CD4-positive, alpha-beta memory T cell (primary cell): ENCODE measurements at regions of chr4 and their contacts with region 1.

Region 1: DNA sequence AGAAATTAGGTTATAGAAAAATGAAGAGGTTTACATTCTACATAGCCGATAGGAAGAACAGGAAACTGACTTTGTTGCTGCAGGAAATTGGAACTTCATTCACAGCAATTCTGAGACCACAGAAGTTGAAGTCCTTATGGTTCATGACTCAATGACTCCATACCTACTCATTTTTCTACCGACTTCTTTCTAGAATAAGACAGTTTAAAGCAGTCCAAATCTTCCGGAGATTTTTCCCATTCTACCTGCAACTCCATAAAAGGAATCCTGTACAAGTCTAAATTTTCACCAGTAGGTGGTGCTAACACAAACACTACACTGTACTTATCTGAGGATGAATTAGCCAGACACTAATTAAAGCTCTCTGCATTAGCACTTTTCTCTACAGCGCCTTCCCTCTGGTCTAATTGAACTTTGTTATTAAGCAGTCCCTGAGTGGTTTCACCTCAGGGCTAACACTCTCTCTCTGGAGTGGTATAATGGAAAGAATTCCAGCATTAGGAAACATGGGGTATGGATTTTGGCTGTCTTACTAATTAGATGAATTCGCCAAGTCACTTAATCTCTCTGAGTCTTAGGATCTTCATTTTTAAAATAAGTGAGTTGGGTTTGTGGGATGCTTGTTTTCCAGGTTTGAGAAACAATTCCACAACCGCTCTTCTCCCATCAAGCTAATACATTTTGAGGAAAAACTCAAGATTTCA is 167.9 kb downstream of the SMIM20 start:
- DNase-seq: peak in 4 of 5 donors; percentile 40 to 55 (median 44)
- H3K4me3 ChIP-seq: no peak overlapping the region
- H3K4me3 Mint-ChIP-seq: peak overlapping the region in 2 of 8 donors; percentile 40 to 47
- H3K27ac ChIP-seq: no peak overlapping the region
- H3K27ac Mint-ChIP-seq: peak overlapping the region in 5 of 7 donors; percentile 4 to 62 (median 31)
- H3K4me1 ChIP-seq: peaks cover 9% of the 10 kb centered on the region
- H3K4me1 Mint-ChIP-seq: peaks cover 9 to 18% (median 15%) of the 10 kb centered on the region in 4 donors
- H3K27me3 ChIP-seq: no peaks in the 10 kb centered on the region
- H3K27me3 Mint-ChIP-seq: no peaks in the 10 kb centered on the region

Region 2: DNA sequence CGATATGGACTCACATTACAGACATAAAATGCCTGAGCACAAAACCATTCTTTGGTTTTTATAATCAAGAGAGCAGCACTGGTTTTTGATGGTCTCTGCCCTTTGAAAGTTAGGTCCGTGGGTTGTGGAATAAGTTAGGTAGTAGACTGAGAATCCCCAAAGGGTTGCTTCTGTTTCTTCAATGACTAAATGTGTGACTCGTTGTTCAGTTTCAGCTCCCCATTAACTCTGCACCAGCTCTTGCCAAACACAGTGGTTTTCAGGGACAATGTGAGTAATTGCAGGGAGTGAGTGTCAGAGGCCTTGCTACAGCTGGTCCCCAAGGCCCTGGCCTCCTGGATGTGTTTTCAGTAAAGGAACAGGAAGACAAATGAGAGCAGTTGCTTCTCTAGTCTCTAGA is 143.2 kb before region 1 on chr4:
- CTCF ChIA-PET with region 1: no interaction called
- POLR2A ChIA-PET with region 1: no interaction called
- intact Hi-C with region 1: no loop called
- DNase-seq: no peak
- H3K4me3 ChIP-seq: no peak overlapping the region
- H3K4me3 Mint-ChIP-seq: peak overlapping the region in 1 of 8 donors; percentile 52
- H3K27ac ChIP-seq: no peak overlapping the region
- H3K27ac Mint-ChIP-seq: peak overlapping the region in 1 of 7 donors; percentile 67
- H3K4me1 ChIP-seq: no peaks in the 10 kb centered on the region
- H3K4me1 Mint-ChIP-seq: peaks cover 6 to 15% (median 11%) of the 10 kb centered on the region in 4 donors
- H3K27me3 ChIP-seq: no peaks in the 10 kb centered on the region
- H3K27me3 Mint-ChIP-seq: peaks cover 6 to 7% of the 10 kb centered on the region in 2 donors

Region 3: DNA sequence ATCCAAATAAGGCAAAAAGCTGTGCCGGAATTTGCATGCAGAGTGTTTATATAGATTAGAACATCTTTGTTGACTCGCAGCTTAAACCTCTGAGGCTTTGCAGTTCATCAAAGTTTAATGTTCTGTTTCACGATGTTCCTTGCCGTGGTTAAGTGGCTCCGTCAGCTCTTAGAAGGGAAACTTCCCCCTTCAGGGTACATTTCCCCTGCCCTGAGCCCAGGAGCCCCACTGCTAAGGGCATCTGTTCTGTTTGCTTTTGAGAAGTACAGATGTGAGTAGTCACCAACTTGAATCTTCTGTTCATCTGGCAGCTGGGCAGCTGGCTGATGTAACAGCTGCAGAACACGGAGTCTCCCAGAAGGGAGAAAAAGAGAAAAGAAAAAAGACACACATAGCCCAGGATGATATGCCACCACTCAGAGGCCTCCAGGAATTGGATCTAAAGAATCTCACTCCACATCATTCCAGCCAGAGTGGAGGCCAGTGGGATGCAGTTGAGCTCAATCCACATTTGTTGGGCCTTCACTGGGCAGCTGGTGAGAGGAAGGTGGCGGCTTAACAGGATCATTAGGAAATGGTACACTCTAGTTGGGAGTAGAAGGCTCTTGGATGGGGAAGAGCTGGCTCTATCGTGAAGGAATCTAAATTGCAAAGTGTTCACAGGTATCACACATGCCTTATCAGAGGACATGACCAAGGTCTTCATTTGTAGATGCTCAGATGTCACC is 60.1 kb after region 1 on chr4:
- CTCF ChIA-PET with region 1: no interaction called
- POLR2A ChIA-PET with region 1: no interaction called
- intact Hi-C with region 1: no loop called
- DNase-seq: peak in 2 of 5 donors; percentile 11 to 21
- H3K4me3 ChIP-seq: no peak overlapping the region
- H3K4me3 Mint-ChIP-seq: peak overlapping the region in 1 of 8 donors; percentile 14
- H3K27ac ChIP-seq: no peak overlapping the region
- H3K27ac Mint-ChIP-seq: peak overlapping the region in 5 of 7 donors; percentile 6 to 92 (median 37)
- H3K4me1 ChIP-seq: no peaks in the 10 kb centered on the region
- H3K4me1 Mint-ChIP-seq: peaks cover 4 to 28% (median 12%) of the 10 kb centered on the region in 4 donors
- H3K27me3 ChIP-seq: no peaks in the 10 kb centered on the region
- H3K27me3 Mint-ChIP-seq: peaks cover 0 to 2% of the 10 kb centered on the region in 2 donors

Region 4: GRCh38 chr4:26161030-26161824 is 79.3 kb after region 1 on chr4:
- CTCF ChIA-PET with region 1: interaction called, 10 read pairs
- POLR2A ChIA-PET with region 1: no interaction called
- intact Hi-C with region 1: no loop called
- DNase-seq: no peak
- H3K4me3 ChIP-seq: no peak overlapping the region
- H3K4me3 Mint-ChIP-seq: peak overlapping the region in 1 of 8 donors; percentile 22
- H3K27ac ChIP-seq: no peak overlapping the region
- H3K27ac Mint-ChIP-seq: peak overlapping the region in 1 of 7 donors; percentile 24
- H3K4me1 ChIP-seq: no peaks in the 10 kb centered on the region
- H3K4me1 Mint-ChIP-seq: peaks cover 0 to 7% (median 2%) of the 10 kb centered on the region in 4 donors
- H3K27me3 ChIP-seq: no peaks in the 10 kb centered on the region
- H3K27me3 Mint-ChIP-seq: no peaks in the 10 kb centered on the region

Region 5: DNA sequence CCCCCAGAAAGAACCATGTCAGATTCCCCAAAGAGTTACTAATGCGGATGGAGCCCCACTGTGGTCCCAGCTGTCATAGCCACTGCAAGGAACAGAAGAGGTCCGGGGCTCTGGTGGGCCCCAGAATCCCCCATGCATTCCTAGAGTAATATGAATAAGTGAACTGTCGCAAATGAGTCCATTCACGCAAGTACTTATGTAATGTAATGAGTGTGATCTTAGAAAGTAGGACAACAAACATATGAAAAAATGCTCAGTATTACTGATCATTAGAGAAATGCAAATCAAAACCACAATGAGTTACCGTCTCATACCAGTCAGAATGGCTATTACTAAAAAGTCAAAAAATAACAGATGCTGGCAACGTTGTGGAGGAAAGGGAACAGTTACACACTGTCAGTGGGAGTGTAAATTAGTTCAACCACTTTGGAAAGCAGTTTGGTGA is 97.4 kb after region 1 on chr4:
- CTCF ChIA-PET with region 1: no interaction called
- POLR2A ChIA-PET with region 1: no interaction called
- intact Hi-C with region 1: loop called (anchors 5 kb)
- DNase-seq: no peak
- H3K4me3 ChIP-seq: no peak overlapping the region
- H3K4me3 Mint-ChIP-seq: no peak overlapping the region
- H3K27ac ChIP-seq: no peak overlapping the region
- H3K27ac Mint-ChIP-seq: peak overlapping the region in 2 of 7 donors; percentile 34 to 59
- H3K4me1 ChIP-seq: peaks cover 9% of the 10 kb centered on the region
- H3K4me1 Mint-ChIP-seq: peaks cover 0 to 19% (median 9%) of the 10 kb centered on the region in 4 donors
- H3K27me3 ChIP-seq: no peaks in the 10 kb centered on the region
- H3K27me3 Mint-ChIP-seq: no peaks in the 10 kb centered on the region

Region 6: GRCh38 chr4:26197018-26197779 is 115.3 kb after region 1 on chr4:
- CTCF ChIA-PET with region 1: interaction called, 8 read pairs
- POLR2A ChIA-PET with region 1: interaction called, 4 read pairs
- intact Hi-C with region 1: loop called (anchors 1 kb)
- DNase-seq: peak; percentile 55 to 88 (median 68)
- H3K4me3 ChIP-seq: peak overlapping the region; percentile 43
- H3K4me3 Mint-ChIP-seq: peak overlapping the region; percentile 72 to 88 (median 81)
- H3K27ac ChIP-seq: peak overlapping the region; percentile 27
- H3K27ac Mint-ChIP-seq: peak overlapping the region; percentile 88 to 96 (median 94)
- H3K4me1 ChIP-seq: peaks cover 52% of the 10 kb centered on the region
- H3K4me1 Mint-ChIP-seq: peaks cover 45 to 80% (median 70%) of the 10 kb centered on the region in 4 donors
- H3K27me3 ChIP-seq: no peaks in the 10 kb centered on the region
- H3K27me3 Mint-ChIP-seq: no peaks in the 10 kb centered on the region

Region 7: DNA sequence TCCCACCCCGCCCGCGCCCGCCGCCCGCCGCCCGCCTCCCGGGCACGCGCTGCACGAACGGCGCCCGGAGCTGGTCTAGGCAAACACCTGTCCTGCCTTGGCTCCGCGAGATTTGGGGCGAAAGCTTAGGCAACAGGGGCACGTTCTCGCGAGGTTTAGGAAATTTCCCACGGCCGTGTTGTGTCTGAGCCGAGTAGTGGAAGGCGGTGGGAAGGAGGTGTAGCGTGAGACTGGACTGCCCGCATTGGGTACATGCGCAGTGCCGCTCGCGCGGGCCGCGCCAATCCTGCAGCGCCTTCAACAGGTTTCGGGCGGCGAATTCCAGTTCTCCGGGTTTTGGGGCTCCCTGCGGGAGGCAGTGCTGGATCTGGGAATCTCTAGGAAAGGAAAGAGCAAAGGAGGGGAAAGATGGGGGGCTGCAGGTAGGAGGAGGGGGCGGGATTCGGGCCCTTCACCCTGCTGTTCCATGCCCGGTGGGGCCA is 237.6 kb after region 1 on chr4:
- CTCF ChIA-PET with region 1: interaction called, 223 read pairs
- POLR2A ChIA-PET with region 1: interaction called, 20 read pairs
- intact Hi-C with region 1: loop called (anchors 1 kb)
- DNase-seq: peak; percentile 96 to 98 (median 96)
- H3K4me3 ChIP-seq: peak overlapping the region; percentile 86
- H3K4me3 Mint-ChIP-seq: peak overlapping the region; percentile 96 to 100 (median 97)
- H3K27ac ChIP-seq: peak overlapping the region; percentile 97
- H3K27ac Mint-ChIP-seq: peak overlapping the region; percentile 98 to 99 (median 99)
- H3K4me1 ChIP-seq: peaks cover 32% of the 10 kb centered on the region
- H3K4me1 Mint-ChIP-seq: peaks cover 21 to 55% (median 32%) of the 10 kb centered on the region in 4 donors
- H3K27me3 ChIP-seq: no peaks in the 10 kb centered on the region
- H3K27me3 Mint-ChIP-seq: peaks cover 0 to 2% of the 10 kb centered on the region in 2 donors